ENCODE measurements at regions of chrX and their contacts with region 1.

Region 1: GRCh38 chrX:19887911-19888879 is 795 bp upstream of the SH3KBP1 start:
- DNase-seq: peak; percentile 37 to 64 (median 47)
- H3K4me3 ChIP-seq: peak overlapping the region in 2 of 4 donors; percentile 40 to 57
- H3K27ac ChIP-seq: peak overlapping the region in 4 of 5 donors; percentile 27 to 80 (median 40)
- H3K4me1 ChIP-seq: no peaks in the 10 kb centered on the region
- H3K27me3 ChIP-seq: no peaks in the 10 kb centered on the region
- CTCF ChIP-seq: peak; percentile 37 to 74 (median 70)
- POLR2A ChIP-seq: no peak

Region 2: DNA sequence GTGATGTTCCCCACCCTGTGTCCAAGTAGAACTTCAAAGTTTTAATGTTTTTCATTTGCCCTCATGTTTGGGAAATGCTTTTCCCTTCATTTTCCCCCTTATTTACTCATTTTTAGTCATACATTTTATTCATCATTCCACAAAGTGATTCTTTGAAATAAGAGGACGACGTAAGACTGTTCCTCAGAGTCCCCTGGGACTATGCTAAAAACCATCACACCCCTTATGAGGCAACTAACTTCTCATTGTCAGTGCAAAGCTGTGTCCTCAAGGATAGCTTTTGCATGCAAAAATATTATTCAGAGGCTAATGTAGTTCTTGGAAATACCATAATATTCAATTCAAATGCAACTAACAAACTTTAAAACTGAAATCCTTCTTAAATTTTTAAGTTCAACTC is 751.1 kb before region 1 on chrX:
- intact Hi-C with region 1: no loop called
- DNase-seq: no peak
- H3K4me3 ChIP-seq: no peak overlapping the region
- H3K27ac ChIP-seq: no peak overlapping the region
- H3K4me1 ChIP-seq: no peaks in the 10 kb centered on the region
- H3K27me3 ChIP-seq: peaks cover 6% of the 10 kb centered on the region
- CTCF ChIP-seq: no peak
- POLR2A ChIP-seq: no peak

Region 3: GRCh38 chrX:19593690-19594089 is 294.5 kb before region 1 on chrX:
- intact Hi-C with region 1: loop called (anchors 10 kb)
- DNase-seq: peak in 1 of 7 donors; percentile 15
- H3K4me3 ChIP-seq: no peak overlapping the region
- H3K27ac ChIP-seq: no peak overlapping the region
- H3K4me1 ChIP-seq: no peaks in the 10 kb centered on the region
- H3K27me3 ChIP-seq: no peaks in the 10 kb centered on the region
- CTCF ChIP-seq: peak; percentile 25 to 58 (median 46)
- POLR2A ChIP-seq: no peak

Region 4: GRCh38 chrX:19739683-19740082 is 148.5 kb before region 1 on chrX:
- intact Hi-C with region 1: loop called in 1 of 2 experiments (anchors 5 kb)
- DNase-seq: peak; percentile 43 to 81 (median 63)
- H3K4me3 ChIP-seq: no peak overlapping the region
- H3K27ac ChIP-seq: no peak overlapping the region
- H3K4me1 ChIP-seq: no peaks in the 10 kb centered on the region
- H3K27me3 ChIP-seq: no peaks in the 10 kb centered on the region
- CTCF ChIP-seq: peak; percentile 41 to 73 (median 70)
- POLR2A ChIP-seq: no peak

Measured in adrenal gland (tissue), 19 donors.